ENCODE measurements at regions of chr6 and their contacts with region 1.

Region 1: GRCh38 chr6:130365166-130366106 is at the start of gene TMEM200A:
- DNase-seq: peak; percentile 38
- H3K4me3 ChIP-seq: peak within 1 kb of the TSS; percentile 43 to 72 (median 66)
- H3K27ac ChIP-seq: no peak within 1 kb of the TSS
- H3K4me1 ChIP-seq: peaks cover 6% of the 10 kb centered on the region
- H3K27me3 ChIP-seq: peaks cover 22 to 34% of the 10 kb centered on the region in 2 experiments
- CTCF ChIP-seq: peak; percentile 80 to 94
- POLR2A ChIP-seq: no peak
- total RNA-seq, gene TMEM200A: 0.74 and 0.75 TPM in 2 replicates

Region 2: DNA sequence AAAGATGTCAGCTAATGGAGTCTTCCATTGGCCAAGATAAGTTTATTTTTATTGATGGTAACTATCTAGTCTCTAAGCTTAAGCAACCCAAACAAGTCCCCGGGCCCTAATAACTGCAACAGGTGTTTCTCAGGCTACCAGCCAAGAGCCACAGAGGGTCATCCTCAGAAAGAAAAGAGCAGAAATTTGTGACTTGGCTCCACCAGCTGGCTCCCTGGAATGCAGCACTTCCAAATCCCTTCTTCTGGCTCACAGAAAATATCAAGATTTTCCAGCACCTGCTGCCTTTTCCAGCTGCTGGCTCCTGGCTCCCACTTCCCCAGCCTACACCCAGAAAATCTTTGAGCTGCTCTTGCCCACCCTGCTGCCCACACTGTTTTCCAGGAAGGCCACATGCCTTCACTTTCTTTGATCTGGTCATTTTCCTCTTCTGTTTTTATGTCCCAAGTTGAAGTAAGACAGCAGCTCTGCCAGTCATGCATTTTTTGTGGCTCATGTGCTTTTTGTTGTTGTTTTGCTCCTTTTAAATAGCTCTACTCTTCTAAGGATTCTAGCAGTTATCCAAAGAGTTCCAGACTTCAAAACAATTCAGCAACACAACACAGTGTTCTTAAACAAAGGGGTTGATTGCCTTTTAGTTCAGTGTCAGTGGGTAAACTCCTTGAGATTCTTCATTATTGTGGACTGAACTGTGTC is 310.8 kb after region 1 on chr6:
- CTCF ChIA-PET with region 1: interaction called, 12 read pairs
- POLR2A ChIA-PET with region 1: no interaction called
- dilution Hi-C with region 1: no loop called
- intact Hi-C with region 1: loop called (anchors 5 kb)
- DNase-seq: no peak
- H3K4me3 ChIP-seq: no peak overlapping the region
- H3K27ac ChIP-seq: no peak overlapping the region
- H3K4me1 ChIP-seq: peaks cover 12% of the 10 kb centered on the region
- H3K27me3 ChIP-seq: no peaks in the 10 kb centered on the region
- CTCF ChIP-seq: no peak
- POLR2A ChIP-seq: no peak

Region 3: GRCh38 chr6:130760006-130760405 is 394.6 kb after region 1 on chr6:
- CTCF ChIA-PET with region 1: interaction called, 8 read pairs
- POLR2A ChIA-PET with region 1: no interaction called
- dilution Hi-C with region 1: no loop called
- intact Hi-C with region 1: loop called (anchors 1 kb)
- DNase-seq: peak; percentile 47
- H3K4me3 ChIP-seq: no peak overlapping the region
- H3K27ac ChIP-seq: no peak overlapping the region
- H3K4me1 ChIP-seq: no peaks in the 10 kb centered on the region
- H3K27me3 ChIP-seq: peaks cover 0 to 10% of the 10 kb centered on the region in 2 experiments
- CTCF ChIP-seq: peak; percentile 56 to 72
- POLR2A ChIP-seq: no peak

Region 4: GRCh38 chr6:130843575-130844320 is 478.3 kb after region 1 on chr6:
- CTCF ChIA-PET with region 1: interaction called, 5 read pairs
- POLR2A ChIA-PET with region 1: no interaction called
- dilution Hi-C with region 1: no loop called
- intact Hi-C with region 1: loop called (anchors 1 kb)
- DNase-seq: peak; percentile 64
- H3K4me3 ChIP-seq: no peak overlapping the region
- H3K27ac ChIP-seq: no peak overlapping the region
- H3K4me1 ChIP-seq: no peaks in the 10 kb centered on the region
- H3K27me3 ChIP-seq: no peaks in the 10 kb centered on the region
- CTCF ChIP-seq: peak; percentile 34 to 35
- POLR2A ChIP-seq: no peak